ENCODE measurements at regions of chr16 and their contacts with region 1.

Region 1: GRCh38 chr16:19393226-19394074 is 24.2 kb upstream of the TMC5 start:
- DNase-seq: no peak
- ATAC-seq: no peak
- H3K4me3 ChIP-seq: no peak overlapping the region
- H3K27ac ChIP-seq: no peak overlapping the region
- H3K4me1 ChIP-seq: no peaks in the 10 kb centered on the region
- H3K27me3 ChIP-seq: peaks cover 0 to 45% (median 10%) of the 10 kb centered on the region in 9 donors
- CTCF ChIP-seq: no peak
- POLR2A ChIP-seq: no peak

Region 2: GRCh38 chr16:19363740-19364139 is 29.7 kb before region 1 on chr16:
- intact Hi-C with region 1: no loop called
- DNase-seq: no peak
- ATAC-seq: no peak
- H3K4me3 ChIP-seq: no peak overlapping the region
- H3K27ac ChIP-seq: no peak overlapping the region
- H3K4me1 ChIP-seq: no peaks in the 10 kb centered on the region
- H3K27me3 ChIP-seq: peaks cover 0 to 7% (median 0%) of the 10 kb centered on the region in 9 donors
- CTCF ChIP-seq: no peak
- POLR2A ChIP-seq: no peak

Region 3: DNA sequence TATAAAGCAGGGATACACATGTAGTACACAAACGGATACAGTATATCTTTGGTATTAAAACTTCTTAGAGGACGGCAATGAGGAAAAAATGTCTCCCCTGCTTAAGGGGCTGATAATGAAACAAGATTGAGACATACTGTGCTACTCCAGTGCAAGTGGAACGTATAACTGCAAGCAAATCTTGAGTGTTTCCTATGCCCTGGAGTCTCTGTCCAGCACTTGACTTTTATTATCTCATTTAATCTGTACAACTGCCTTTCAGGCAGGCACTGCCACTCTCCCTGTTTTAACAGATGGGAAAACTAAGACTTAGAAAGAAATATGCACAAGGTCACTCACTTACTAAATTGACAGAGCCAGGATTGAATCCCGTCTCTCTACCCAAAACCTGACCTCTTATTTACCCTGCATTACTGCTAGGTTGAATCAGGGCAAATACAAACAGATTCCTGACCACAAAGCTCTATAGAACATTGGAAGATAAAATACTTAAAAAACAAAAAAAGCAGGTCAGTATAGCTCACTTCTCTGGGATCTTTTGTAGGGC is 52.9 kb after region 1 on chr16:
- intact Hi-C with region 1: loop called in 1 of 10 experiments (anchors 10 kb)
- DNase-seq: no peak
- ATAC-seq: no peak
- H3K4me3 ChIP-seq: no peak overlapping the region
- H3K27ac ChIP-seq: no peak overlapping the region
- H3K4me1 ChIP-seq: no peaks in the 10 kb centered on the region
- H3K27me3 ChIP-seq: peaks cover 0 to 9% (median 0%) of the 10 kb centered on the region in 9 donors
- CTCF ChIP-seq: no peak
- POLR2A ChIP-seq: no peak